B cell (primary cell): ENCODE measurements at regions of chr19 and their contacts with region 1.

Region 1: DNA sequence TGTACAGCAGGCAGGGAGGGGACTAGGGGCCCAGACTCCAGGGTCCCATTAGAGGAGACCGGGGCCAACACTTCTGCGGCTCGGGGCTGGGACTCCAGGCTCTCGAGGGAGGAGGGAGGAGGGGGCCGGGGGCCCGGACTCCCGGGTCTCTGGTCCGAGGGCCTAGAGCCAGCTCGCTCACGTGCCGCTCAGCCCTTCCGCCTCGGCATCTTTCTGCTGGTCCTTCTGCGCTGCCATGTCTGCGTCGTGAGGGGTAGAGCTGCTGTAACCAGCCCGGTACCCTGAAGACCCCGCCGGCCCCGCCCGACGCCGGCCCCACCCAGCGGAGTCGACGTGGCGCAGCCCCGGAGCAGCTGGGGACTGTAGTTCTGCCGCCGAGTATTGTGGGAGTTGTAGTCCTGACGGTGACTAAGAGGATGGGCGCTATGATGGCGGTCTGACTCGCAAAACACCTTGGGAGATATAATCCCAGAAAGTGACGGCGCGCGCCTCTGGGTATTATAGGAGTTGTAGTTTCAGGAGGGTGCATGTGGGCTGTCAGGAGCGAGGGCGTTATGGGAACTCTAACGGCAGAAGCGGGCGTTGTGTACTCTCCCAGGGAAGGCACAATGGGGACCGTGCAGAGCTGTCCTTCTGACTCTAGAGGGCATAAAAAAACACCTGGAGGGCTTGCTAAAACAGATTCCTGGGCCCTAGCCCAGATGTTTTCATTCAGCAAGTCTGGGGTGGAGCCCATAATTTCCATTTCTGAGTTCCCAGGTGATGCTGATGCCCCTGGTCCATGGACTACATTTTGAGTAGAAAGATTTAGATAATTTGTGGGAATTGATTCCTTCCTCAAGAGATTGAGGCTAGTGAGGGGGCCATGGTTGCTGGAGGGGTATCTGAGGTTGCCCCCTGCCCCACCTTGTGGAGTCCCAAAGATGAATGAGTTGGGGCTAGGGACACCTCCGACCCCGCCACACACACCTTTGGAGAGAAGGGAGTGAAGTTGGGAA is at the start of gene RABAC1:
- DNase-seq: peak; percentile 89
- ATAC-seq: peak; percentile 90
- H3K4me3 ChIP-seq: peak within 1 kb of the TSS; percentile 57 to 94 (median 81)
- H3K4me3 Mint-ChIP-seq: peak within 1 kb of the TSS; percentile 99
- H3K27ac ChIP-seq: peak within 1 kb of the TSS; percentile 78
- H3K27ac Mint-ChIP-seq: peak within 1 kb of the TSS; percentile 89
- H3K4me1 ChIP-seq: peaks cover 10 to 22% of the 10 kb centered on the region in 2 donors
- H3K4me1 Mint-ChIP-seq: peaks cover 18% of the 10 kb centered on the region
- H3K27me3 ChIP-seq: no peaks in the 10 kb centered on the region
- H3K27me3 Mint-ChIP-seq: no peaks in the 10 kb centered on the region
- CTCF ChIP-seq: peak; percentile 44
- total RNA-seq, gene RABAC1: 139 and 146 TPM in 2 replicates

Region 2: GRCh38 chr19:41706741-41707501 is 252.4 kb before region 1 on chr19:
- CTCF ChIA-PET with region 1: no interaction called
- POLR2A ChIA-PET with region 1: no interaction called
- intact Hi-C with region 1: no loop called
- DNase-seq: peak; percentile 83
- ATAC-seq: peak; percentile 85
- H3K4me3 ChIP-seq: peak overlapping the region in 4 of 5 experiments; percentile 20 to 51 (median 35)
- H3K4me3 Mint-ChIP-seq: peak overlapping the region; percentile 71
- H3K27ac ChIP-seq: no peak overlapping the region
- H3K27ac Mint-ChIP-seq: no peak overlapping the region
- H3K4me1 ChIP-seq: peaks cover 0 to 4% of the 10 kb centered on the region in 2 donors
- H3K4me1 Mint-ChIP-seq: peaks cover 4% of the 10 kb centered on the region
- H3K27me3 ChIP-seq: peaks cover 0 to 29% (median 7%) of the 10 kb centered on the region in 4 experiments
- H3K27me3 Mint-ChIP-seq: peaks cover 51% of the 10 kb centered on the region
- CTCF ChIP-seq: peak; percentile 98

Region 3: GRCh38 chr19:41753936-41754529 is 205.3 kb before region 1 on chr19:
- CTCF ChIA-PET with region 1: interaction called, 13 read pairs
- POLR2A ChIA-PET with region 1: no interaction called
- intact Hi-C with region 1: no loop called
- DNase-seq: peak; percentile 76
- ATAC-seq: peak; percentile 94
- H3K4me3 ChIP-seq: no peak overlapping the region
- H3K4me3 Mint-ChIP-seq: no peak overlapping the region
- H3K27ac ChIP-seq: no peak overlapping the region
- H3K27ac Mint-ChIP-seq: no peak overlapping the region
- H3K4me1 ChIP-seq: peaks cover 0 to 8% of the 10 kb centered on the region in 2 donors
- H3K4me1 Mint-ChIP-seq: peaks cover 1% of the 10 kb centered on the region
- H3K27me3 ChIP-seq: peaks cover 0 to 7% (median 0%) of the 10 kb centered on the region in 4 experiments
- H3K27me3 Mint-ChIP-seq: peaks cover 11% of the 10 kb centered on the region
- CTCF ChIP-seq: peak; percentile 76

Region 4: DNA sequence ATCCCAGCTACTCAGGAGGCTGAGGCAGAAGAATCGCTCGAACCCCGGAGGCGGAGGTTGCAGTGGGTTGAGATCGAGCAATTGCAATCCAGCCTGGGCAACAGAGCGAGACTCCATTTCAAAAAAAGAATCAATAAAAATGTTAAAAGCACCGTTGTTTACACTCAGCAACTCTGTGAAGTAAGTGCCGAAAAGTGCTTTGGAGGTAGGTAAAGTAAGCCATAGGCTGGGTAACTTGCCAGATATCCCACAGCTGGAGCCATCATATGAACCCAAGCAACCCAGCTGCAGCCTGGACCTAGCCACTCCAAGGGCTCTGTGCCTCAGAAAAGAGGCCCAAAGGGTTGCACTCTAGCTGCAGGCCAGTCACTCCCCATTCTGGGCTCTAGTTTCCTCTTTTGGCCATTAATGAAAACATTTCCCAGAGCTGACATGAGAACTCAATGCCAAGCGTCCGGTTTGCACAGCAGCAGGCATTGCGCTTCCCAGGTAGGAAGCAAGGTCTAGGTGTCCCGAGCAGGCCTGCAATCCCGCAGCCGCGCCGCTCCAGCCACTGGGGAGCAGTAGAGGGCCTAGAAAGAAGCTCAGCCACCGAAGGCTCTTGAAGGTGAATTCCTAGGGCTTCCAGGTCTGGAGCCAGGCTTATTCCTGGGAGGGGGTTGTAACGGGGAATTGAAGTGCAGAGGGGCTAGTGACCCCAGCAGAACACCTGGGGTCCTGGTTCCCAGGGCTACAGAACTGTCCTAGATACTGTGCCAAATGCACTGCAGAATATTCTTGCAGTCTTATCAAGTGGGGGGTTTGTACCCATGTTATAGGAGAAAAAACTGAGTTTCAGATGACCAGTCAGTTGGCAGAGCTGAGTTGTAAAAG is 86.3 kb before region 1 on chr19:
- CTCF ChIA-PET with region 1: interaction called, 331 read pairs
- POLR2A ChIA-PET with region 1: interaction called, 16 read pairs
- intact Hi-C with region 1: no loop called
- DNase-seq: peak; percentile 80
- ATAC-seq: no peak
- H3K4me3 ChIP-seq: no peak overlapping the region
- H3K4me3 Mint-ChIP-seq: peak overlapping the region; percentile 52
- H3K27ac ChIP-seq: peak overlapping the region; percentile 79 to 96
- H3K27ac Mint-ChIP-seq: peak overlapping the region; percentile 90
- H3K4me1 ChIP-seq: peaks cover 68 to 90% of the 10 kb centered on the region in 2 donors
- H3K4me1 Mint-ChIP-seq: peaks cover 70% of the 10 kb centered on the region
- H3K27me3 ChIP-seq: no peaks in the 10 kb centered on the region
- H3K27me3 Mint-ChIP-seq: no peaks in the 10 kb centered on the region
- CTCF ChIP-seq: peak; percentile 82

Region 5: DNA sequence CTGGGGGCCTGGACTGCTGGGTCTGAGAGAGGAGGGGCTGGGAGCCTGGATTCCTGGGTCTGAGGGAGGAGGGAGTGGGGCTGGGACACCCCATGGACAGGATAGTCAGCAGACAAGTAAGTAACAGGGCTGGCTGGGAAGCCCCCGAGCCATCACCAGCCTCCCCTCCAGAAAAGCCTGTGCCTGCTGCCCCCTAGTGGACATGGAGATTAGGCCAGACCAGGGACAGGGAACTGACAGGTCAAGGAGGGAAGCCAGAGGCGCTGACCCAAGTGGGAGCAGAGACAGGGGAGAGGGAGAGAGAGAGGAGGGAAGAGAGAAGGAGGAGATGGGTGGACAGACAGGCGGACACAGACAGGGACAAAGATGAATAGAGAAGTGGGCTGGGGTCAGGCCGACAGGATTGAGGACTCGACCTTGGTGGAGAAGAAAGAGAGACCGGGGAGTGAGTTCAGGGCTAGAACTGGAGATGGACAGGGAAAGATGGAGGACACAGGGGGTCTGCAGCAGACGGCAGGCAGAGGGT is 24.4 kb before region 1 on chr19:
- CTCF ChIA-PET with region 1: no interaction called
- POLR2A ChIA-PET with region 1: interaction called, 3 read pairs
- intact Hi-C with region 1: loop called (anchors 2 kb)
- DNase-seq: peak; percentile 88
- ATAC-seq: peak; percentile 84
- H3K4me3 ChIP-seq: no peak overlapping the region
- H3K4me3 Mint-ChIP-seq: peak overlapping the region; percentile 33
- H3K27ac ChIP-seq: peak overlapping the region in 1 of 2 donors; percentile 55
- H3K27ac Mint-ChIP-seq: peak overlapping the region; percentile 86
- H3K4me1 ChIP-seq: peaks cover 42 to 69% of the 10 kb centered on the region in 2 donors
- H3K4me1 Mint-ChIP-seq: peaks cover 53% of the 10 kb centered on the region
- H3K27me3 ChIP-seq: peaks cover 0 to 10% (median 0%) of the 10 kb centered on the region in 4 experiments
- H3K27me3 Mint-ChIP-seq: no peaks in the 10 kb centered on the region
- CTCF ChIP-seq: peak; percentile 89

Region 6: GRCh38 chr19:41993612-41994483 is 34.5 kb after region 1 on chr19 and contains the start of gene ATP1A3:
- CTCF ChIA-PET with region 1: no interaction called
- POLR2A ChIA-PET with region 1: interaction called, 5 read pairs
- intact Hi-C with region 1: loop called (anchors 1 kb)
- DNase-seq: peak; percentile 79
- ATAC-seq: peak; percentile 91
- H3K4me3 ChIP-seq: peak within 1 kb of the TSS; percentile 25 to 83 (median 56)
- H3K4me3 Mint-ChIP-seq: peak within 1 kb of the TSS; percentile 74
- H3K27ac ChIP-seq: no peak within 1 kb of the TSS
- H3K27ac Mint-ChIP-seq: peak within 1 kb of the TSS; percentile 61
- H3K4me1 ChIP-seq: peaks cover 29 to 30% of the 10 kb centered on the region in 2 donors
- H3K4me1 Mint-ChIP-seq: peaks cover 40% of the 10 kb centered on the region
- H3K27me3 ChIP-seq: peaks cover 0 to 55% (median 29%) of the 10 kb centered on the region in 4 experiments
- H3K27me3 Mint-ChIP-seq: peaks cover 43% of the 10 kb centered on the region
- CTCF ChIP-seq: no peak
- total RNA-seq, gene ATP1A3: 3.4 and 3.8 TPM in 2 replicates

Region 7: GRCh38 chr19:42108527-42109389 is 149.4 kb after region 1 on chr19:
- CTCF ChIA-PET with region 1: no interaction called
- POLR2A ChIA-PET with region 1: no interaction called
- intact Hi-C with region 1: no loop called
- DNase-seq: peak; percentile 92
- ATAC-seq: peak; percentile 98
- H3K4me3 ChIP-seq: no peak overlapping the region
- H3K4me3 Mint-ChIP-seq: peak overlapping the region; percentile 24
- H3K27ac ChIP-seq: peak overlapping the region in 1 of 2 donors; percentile 58
- H3K27ac Mint-ChIP-seq: peak overlapping the region; percentile 71
- H3K4me1 ChIP-seq: peaks cover 33 to 53% of the 10 kb centered on the region in 2 donors
- H3K4me1 Mint-ChIP-seq: peaks cover 57% of the 10 kb centered on the region
- H3K27me3 ChIP-seq: no peaks in the 10 kb centered on the region
- H3K27me3 Mint-ChIP-seq: no peaks in the 10 kb centered on the region
- CTCF ChIP-seq: peak; percentile 100

Region 8: GRCh38 chr19:42129399-42130253 is 170.3 kb after region 1 on chr19:
- CTCF ChIA-PET with region 1: no interaction called
- POLR2A ChIA-PET with region 1: no interaction called
- intact Hi-C with region 1: no loop called
- DNase-seq: peak; percentile 88
- ATAC-seq: peak; percentile 72
- H3K4me3 ChIP-seq: peak overlapping the region; percentile 61 to 100 (median 98)
- H3K4me3 Mint-ChIP-seq: peak overlapping the region; percentile 92
- H3K27ac ChIP-seq: peak overlapping the region; percentile 56 to 71
- H3K27ac Mint-ChIP-seq: peak overlapping the region; percentile 92
- H3K4me1 ChIP-seq: peaks cover 60 to 85% of the 10 kb centered on the region in 2 donors
- H3K4me1 Mint-ChIP-seq: peaks cover 87% of the 10 kb centered on the region
- H3K27me3 ChIP-seq: no peaks in the 10 kb centered on the region
- H3K27me3 Mint-ChIP-seq: no peaks in the 10 kb centered on the region
- CTCF ChIP-seq: no peak